Activated CD4-positive, alpha-beta memory T cell treated with anti-CD3 and anti-CD28 coated beads for 36 hours (primary cell): ENCODE measurements at regions of chr18 and their contacts with region 1.

Region 1: GRCh38 chr18:59268721-59269562 is 4.3 kb downstream of the RAX start:
- DNase-seq: peak; percentile 72
- H3K4me3 Mint-ChIP-seq: peak overlapping the region; percentile 29
- H3K27ac Mint-ChIP-seq: no peak overlapping the region
- H3K4me1 Mint-ChIP-seq: peaks cover 43% of the 10 kb centered on the region
- H3K27me3 Mint-ChIP-seq: peaks cover 79% of the 10 kb centered on the region

Region 2: GRCh38 chr18:57434536-57435494 is 1834.1 kb before region 1 on chr18 and contains the start of gene ONECUT2:
- CTCF ChIA-PET with region 1: no interaction called
- POLR2A ChIA-PET with region 1: no interaction called
- intact Hi-C with region 1: loop called (anchors 10 kb)
- DNase-seq: peak; percentile 83
- H3K4me3 Mint-ChIP-seq: peak within 1 kb of the TSS; percentile 48
- H3K27ac Mint-ChIP-seq: peak within 1 kb of the TSS; percentile 42
- H3K4me1 Mint-ChIP-seq: peaks cover 49% of the 10 kb centered on the region
- H3K27me3 Mint-ChIP-seq: peaks cover 81% of the 10 kb centered on the region
- total RNA-seq, gene ONECUT2: 0.02 TPM in 1 of 2 experiments, not detected in the other

Region 3: DNA sequence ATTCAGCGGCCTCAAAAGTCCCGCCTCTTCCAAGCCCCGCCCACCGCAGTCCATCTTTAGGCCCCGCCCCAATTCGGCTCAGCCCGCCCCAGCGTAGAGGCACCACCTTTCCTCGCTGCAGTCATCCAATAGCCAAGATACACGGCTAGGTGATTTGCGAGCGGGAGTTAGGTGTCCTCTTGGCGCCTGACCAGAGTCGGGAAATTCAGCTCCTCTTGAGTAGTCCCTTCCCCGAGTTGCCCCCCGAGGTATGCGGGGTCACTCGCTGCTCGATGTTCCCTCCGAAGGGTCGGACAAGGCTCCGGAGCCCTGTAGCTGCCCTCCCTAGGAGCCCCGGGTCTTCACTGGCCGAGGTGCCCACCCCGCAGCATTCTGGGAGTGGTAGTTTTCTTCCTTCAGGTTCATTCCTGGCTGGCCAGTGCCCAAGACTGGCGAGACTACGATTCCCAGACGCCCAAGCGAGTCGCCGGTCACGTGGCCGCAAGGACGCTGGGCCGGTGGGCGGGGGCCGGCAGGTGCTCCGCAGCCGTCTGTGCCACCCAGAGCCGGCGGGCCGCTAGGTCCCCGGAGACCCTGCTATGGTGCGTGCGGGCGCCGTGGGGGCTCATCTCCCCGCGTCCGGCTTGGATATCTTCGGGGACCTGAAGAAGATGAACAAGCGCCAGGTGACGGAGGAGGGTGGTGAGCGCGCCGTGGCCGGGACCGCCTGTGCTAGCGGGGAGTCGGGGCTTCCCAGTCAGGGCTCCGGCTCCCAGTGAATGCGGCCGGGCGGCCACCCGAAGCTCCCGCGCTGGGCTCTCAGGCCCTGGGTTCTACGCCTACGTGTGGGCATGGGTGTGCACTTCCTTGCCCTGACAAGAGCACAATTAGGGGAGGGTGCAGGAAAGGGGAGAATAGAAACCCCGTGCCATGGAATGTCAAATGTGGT is 129.3 kb before region 1 on chr18 and contains the start of gene SEC11C:
- CTCF ChIA-PET with region 1: no interaction called
- POLR2A ChIA-PET with region 1: no interaction called
- intact Hi-C with region 1: loop called (anchors 5 kb)
- DNase-seq: peak; percentile 97
- H3K4me3 Mint-ChIP-seq: peak within 1 kb of the TSS; percentile 94
- H3K27ac Mint-ChIP-seq: peak within 1 kb of the TSS; percentile 98
- H3K4me1 Mint-ChIP-seq: peaks cover 38% of the 10 kb centered on the region
- H3K27me3 Mint-ChIP-seq: peaks cover 6% of the 10 kb centered on the region
- total RNA-seq, gene SEC11C: 119 to 130 TPM

Region 4: GRCh38 chr18:59249205-59249774 is 19.7 kb before region 1 on chr18:
- CTCF ChIA-PET with region 1: interaction called, 17 read pairs
- POLR2A ChIA-PET with region 1: no interaction called
- intact Hi-C with region 1: loop called (anchors 1 kb)
- DNase-seq: peak; percentile 54
- H3K4me3 Mint-ChIP-seq: no peak overlapping the region
- H3K27ac Mint-ChIP-seq: no peak overlapping the region
- H3K4me1 Mint-ChIP-seq: no peaks in the 10 kb centered on the region
- H3K27me3 Mint-ChIP-seq: peaks cover 34% of the 10 kb centered on the region

Region 5: GRCh38 chr18:59286341-59286740 is 17.4 kb after region 1 on chr18:
- CTCF ChIA-PET with region 1: no interaction called
- POLR2A ChIA-PET with region 1: no interaction called
- intact Hi-C with region 1: no loop called
- DNase-seq: no peak
- H3K4me3 Mint-ChIP-seq: no peak overlapping the region
- H3K27ac Mint-ChIP-seq: no peak overlapping the region
- H3K4me1 Mint-ChIP-seq: no peaks in the 10 kb centered on the region
- H3K27me3 Mint-ChIP-seq: peaks cover 36% of the 10 kb centered on the region

Region 6: GRCh38 chr18:59358712-59359575 is 90.0 kb after region 1 on chr18 and contains the start of gene LMAN1:
- CTCF ChIA-PET with region 1: interaction called, 3 read pairs
- POLR2A ChIA-PET with region 1: no interaction called
- intact Hi-C with region 1: loop called (anchors 2 kb)
- DNase-seq: peak; percentile 97
- H3K4me3 Mint-ChIP-seq: peak within 1 kb of the TSS; percentile 83
- H3K27ac Mint-ChIP-seq: peak within 1 kb of the TSS; percentile 94
- H3K4me1 Mint-ChIP-seq: peaks cover 26% of the 10 kb centered on the region
- H3K27me3 Mint-ChIP-seq: no peaks in the 10 kb centered on the region
- total RNA-seq, gene LMAN1: 155 to 158 TPM